ENCODE measurements at regions of chr3 and their contacts with region 1.

Region 1: GRCh38 chr3:112143251-112143650 is 10.2 kb upstream of the GCSAM start:
- DNase-seq: no peak
- H3K4me3 Mint-ChIP-seq: peak overlapping the region; percentile 36
- H3K27ac Mint-ChIP-seq: peak overlapping the region; percentile 48
- H3K4me1 Mint-ChIP-seq: peaks cover 19% of the 10 kb centered on the region
- H3K27me3 Mint-ChIP-seq: no peaks in the 10 kb centered on the region

Region 2: DNA sequence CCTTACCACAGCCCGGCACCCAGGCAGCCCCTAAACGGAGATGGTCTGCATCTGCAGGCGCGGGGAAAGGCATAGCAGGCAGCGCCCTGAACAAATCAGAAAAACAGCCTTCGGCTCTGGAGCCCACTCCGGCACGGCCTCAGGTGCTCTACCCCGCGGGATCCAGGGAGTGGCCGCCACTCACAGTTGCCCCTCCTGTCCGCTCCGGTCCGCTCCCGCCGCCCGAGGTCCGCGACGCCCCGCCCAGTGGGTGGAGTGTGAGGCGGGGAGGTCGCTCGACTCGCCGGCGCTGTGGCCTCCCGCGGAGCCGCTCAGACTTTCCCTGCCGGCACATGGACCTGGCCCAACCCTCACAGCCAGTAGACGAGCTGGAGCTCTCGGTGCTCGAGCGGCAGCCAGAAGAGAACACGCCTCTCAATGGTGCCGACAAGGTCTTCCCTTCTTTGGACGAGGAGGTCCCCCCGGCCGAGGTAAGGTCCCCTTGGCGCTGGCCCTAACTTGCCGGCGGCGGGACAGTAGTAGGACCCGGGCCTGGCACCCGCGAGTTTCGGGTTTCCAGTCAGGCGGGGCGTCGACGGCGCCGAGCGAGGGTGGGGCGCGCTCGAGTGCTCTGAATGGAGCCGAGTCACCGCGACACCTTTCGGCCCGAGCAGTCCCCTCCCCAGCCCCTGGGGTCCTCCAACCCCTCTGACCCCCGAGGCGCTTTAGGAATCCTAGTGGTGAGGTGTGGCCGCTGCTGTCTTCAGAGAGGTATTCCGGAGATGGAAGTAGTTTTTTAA is 57.0 kb before region 1 on chr3 and contains the start of gene C3orf52:
- CTCF ChIA-PET with region 1: no interaction called
- intact Hi-C with region 1: no loop called
- DNase-seq: peak; percentile 63
- H3K4me3 Mint-ChIP-seq: peak within 1 kb of the TSS; percentile 82
- H3K27ac Mint-ChIP-seq: peak within 1 kb of the TSS; percentile 9
- H3K4me1 Mint-ChIP-seq: peaks cover 19% of the 10 kb centered on the region
- H3K27me3 Mint-ChIP-seq: peaks cover 6% of the 10 kb centered on the region
- total RNA-seq, gene C3orf52: 3.1 to 3.8 TPM

Region 3: DNA sequence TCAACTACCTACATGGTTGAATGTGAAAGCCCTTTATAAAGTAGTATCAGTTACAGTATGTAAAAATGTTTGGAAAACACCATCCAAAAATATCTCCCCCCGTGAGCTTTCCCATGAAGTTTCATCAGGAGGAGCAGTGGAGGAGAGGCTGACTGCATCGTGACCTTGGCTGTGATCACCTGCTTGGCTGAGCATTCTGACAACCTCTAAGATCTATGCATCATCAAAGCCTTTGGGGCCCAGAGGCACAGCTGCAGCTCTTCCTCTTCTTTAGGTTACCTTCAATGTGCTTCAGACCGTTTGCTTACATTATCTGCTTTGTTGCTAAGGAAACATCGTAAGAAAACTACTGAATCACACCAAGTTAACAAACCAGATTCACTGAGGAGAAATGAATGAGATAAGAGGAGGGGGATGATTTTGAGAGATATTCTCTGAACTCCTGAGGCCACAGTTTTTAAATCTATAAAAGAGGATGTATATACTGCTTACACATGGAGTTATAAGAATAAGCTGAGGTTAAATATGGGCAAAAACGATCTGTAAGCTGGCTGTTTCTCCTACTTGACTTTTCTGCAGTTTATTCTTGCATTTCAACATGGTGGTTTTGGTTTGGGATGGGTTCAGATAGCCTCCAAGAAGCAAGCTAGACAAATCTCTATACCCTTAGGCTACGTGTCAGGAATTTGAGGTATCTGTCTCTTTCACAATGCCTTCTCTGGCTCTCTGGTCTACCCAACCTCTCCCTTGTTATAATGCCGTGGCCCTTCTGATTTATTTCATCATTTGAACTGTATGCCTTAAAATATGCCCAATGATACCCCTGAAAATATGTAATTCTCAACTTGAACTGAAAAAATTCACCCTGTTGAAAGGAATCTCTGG is 14.2 kb before region 1 on chr3:
- CTCF ChIA-PET with region 1: interaction called, 6 read pairs
- intact Hi-C with region 1: loop called (anchors 1 kb)
- DNase-seq: peak; percentile 82
- H3K4me3 Mint-ChIP-seq: peak overlapping the region; percentile 4
- H3K27ac Mint-ChIP-seq: peak overlapping the region; percentile 76
- H3K4me1 Mint-ChIP-seq: peaks cover 74% of the 10 kb centered on the region
- H3K27me3 Mint-ChIP-seq: no peaks in the 10 kb centered on the region

Region 4: GRCh38 chr3:113013593-113013992 is 870.3 kb after region 1 on chr3:
- CTCF ChIA-PET with region 1: no interaction called
- intact Hi-C with region 1: no loop called
- DNase-seq: no peak
- H3K4me3 Mint-ChIP-seq: no peak overlapping the region
- H3K27ac Mint-ChIP-seq: peak overlapping the region; percentile 82
- H3K4me1 Mint-ChIP-seq: peaks cover 83% of the 10 kb centered on the region
- H3K27me3 Mint-ChIP-seq: no peaks in the 10 kb centered on the region

Measured in activated naive CD4-positive, alpha-beta T cell treated with anti-CD3 and anti-CD28 coated beads for 36 hours (primary cell).